ENCODE measurements at regions of chr17 and their contacts with region 1.

Region 1: DNA sequence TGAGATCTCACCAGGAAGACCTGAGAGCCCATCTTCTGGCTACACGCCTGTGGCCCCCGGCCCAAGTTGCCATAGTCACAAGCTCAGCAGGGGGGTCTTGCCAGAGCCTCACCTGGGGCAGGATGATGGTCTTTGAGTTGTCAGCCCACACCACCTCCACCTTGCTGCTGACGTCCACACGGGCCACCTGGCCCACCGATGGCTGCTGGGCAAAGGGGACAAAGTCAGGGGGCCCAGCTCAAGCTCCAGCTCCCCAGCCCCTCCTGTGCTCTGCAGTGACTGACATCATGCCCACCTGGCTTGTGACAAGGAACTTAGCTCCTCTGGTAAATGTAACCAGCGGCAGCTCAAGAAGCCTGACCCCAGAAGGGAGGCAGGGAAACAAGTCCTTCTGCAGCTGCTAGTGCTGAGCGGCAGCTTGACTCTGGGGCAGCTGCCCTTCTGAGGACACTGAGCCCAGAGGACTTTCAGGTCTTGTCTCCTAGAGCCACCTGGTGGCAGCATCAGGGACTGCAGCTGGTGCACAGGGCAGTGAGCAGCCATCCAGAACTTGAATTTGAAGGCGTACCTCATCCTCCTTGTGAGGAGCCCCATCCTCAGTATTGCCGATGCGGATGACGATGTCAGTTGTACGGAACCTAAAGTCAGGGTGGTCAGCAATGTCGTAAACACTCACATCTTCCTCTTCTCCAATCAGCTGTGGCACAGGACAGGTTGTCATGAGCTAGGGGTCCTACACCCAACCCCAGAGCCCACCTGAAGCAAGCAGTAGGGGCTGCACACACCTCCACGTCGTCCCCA is 13.5 kb downstream of the SPHK1 start:
- DNase-seq: peak; percentile 87 to 92
- H3K4me3 ChIP-seq: no peak overlapping the region
- H3K27ac ChIP-seq: no peak overlapping the region
- H3K4me1 ChIP-seq: no peaks in the 10 kb centered on the region
- H3K27me3 ChIP-seq: no peaks in the 10 kb centered on the region
- CTCF ChIP-seq: peak; percentile 97 to 98 (median 97)
- POLR2A ChIP-seq: no peak

Region 2: GRCh38 chr17:76268015-76268749 is 129.7 kb before region 1 on chr17:
- intact Hi-C with region 1: no loop called
- DNase-seq: peak in 1 of 2 donors; percentile 84
- H3K4me3 ChIP-seq: peak overlapping the region in 2 of 3 donors; percentile 1 to 52
- H3K27ac ChIP-seq: peak overlapping the region; percentile 84 to 97
- H3K4me1 ChIP-seq: peaks cover 41 to 47% of the 10 kb centered on the region in 2 donors
- H3K27me3 ChIP-seq: no peaks in the 10 kb centered on the region
- CTCF ChIP-seq: no peak
- POLR2A ChIP-seq: peak; percentile 14

Region 3: GRCh38 chr17:76307299-76307965 is 90.5 kb before region 1 on chr17:
- intact Hi-C with region 1: loop called (anchors 5 kb)
- DNase-seq: no peak
- H3K4me3 ChIP-seq: no peak overlapping the region
- H3K27ac ChIP-seq: no peak overlapping the region
- H3K4me1 ChIP-seq: no peaks in the 10 kb centered on the region
- H3K27me3 ChIP-seq: no peaks in the 10 kb centered on the region
- CTCF ChIP-seq: no peak
- POLR2A ChIP-seq: no peak